ENCODE measurements at regions of chr5 and their contacts with region 1.

Region 1: DNA sequence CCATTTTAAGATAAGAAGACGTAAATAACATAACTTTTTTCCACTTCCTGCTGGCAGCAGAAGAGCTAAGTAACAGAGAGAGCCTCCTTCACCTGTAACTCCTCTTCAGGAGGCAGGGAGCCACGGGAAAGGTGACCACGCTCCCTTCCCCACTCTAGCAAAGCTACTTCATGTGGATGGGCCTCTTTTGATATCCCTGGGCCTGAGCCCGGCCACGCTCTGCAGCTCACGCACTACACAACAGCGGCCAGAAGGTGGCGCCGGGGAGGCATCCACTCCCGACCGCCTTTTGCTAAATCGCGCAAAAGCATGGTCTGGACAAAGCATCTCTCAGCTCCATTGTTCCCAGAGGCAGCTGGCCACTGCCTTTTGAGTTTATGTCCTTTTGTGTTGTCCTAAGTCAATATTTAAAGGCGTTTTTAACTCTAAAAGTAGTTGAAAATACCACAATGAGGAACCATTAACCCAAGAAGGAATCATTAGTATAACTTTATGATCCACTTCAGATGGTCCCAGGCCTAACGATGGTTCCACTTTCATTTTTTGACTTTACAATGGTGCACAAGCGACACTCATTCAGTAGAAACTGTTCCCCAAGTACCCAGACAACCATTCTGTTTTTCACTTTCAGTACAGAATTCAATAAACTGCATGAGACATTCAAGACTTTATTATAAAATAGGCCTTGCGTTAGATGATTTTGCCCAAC is 23.6 kb downstream of the CMBL start:
- DNase-seq: peak; percentile 44 to 83 (median 67)
- ATAC-seq: peak; percentile 86 to 94 (median 92)
- H3K4me3 ChIP-seq: no peak overlapping the region
- H3K4me3 Mint-ChIP-seq: no peak overlapping the region
- H3K27ac ChIP-seq: no peak overlapping the region
- H3K27ac Mint-ChIP-seq: no peak overlapping the region
- H3K4me1 ChIP-seq: peaks cover 0 to 13% of the 10 kb centered on the region in 2 experiments
- H3K4me1 Mint-ChIP-seq: peaks cover 7 to 12% (median 9%) of the 10 kb centered on the region in 3 donors
- H3K27me3 ChIP-seq: peaks cover 0 to 9% of the 10 kb centered on the region in 2 experiments
- H3K27me3 Mint-ChIP-seq: peaks cover 0 to 2% of the 10 kb centered on the region in 2 donors

Region 2: GRCh38 chr5:10353241-10354047 is 69.4 kb after region 1 on chr5 and contains the start of gene MARCHF6:
- CTCF ChIA-PET with region 1: interaction called, 8 to 17 read pairs
- POLR2A ChIA-PET with region 1: no interaction called
- DNase-seq: peak; percentile 88 to 97 (median 94)
- ATAC-seq: peak; percentile 88 to 95 (median 92)
- H3K4me3 ChIP-seq: peak within 1 kb of the TSS; percentile 71 to 87
- H3K4me3 Mint-ChIP-seq: peak within 1 kb of the TSS; percentile 98 to 100 (median 99)
- H3K27ac ChIP-seq: peak within 1 kb of the TSS; percentile 89
- H3K27ac Mint-ChIP-seq: peak within 1 kb of the TSS; percentile 97 to 98
- H3K4me1 ChIP-seq: peaks cover 14 to 25% of the 10 kb centered on the region in 2 experiments
- H3K4me1 Mint-ChIP-seq: peaks cover 44 to 47% (median 45%) of the 10 kb centered on the region in 3 donors
- H3K27me3 ChIP-seq: no peaks in the 10 kb centered on the region
- H3K27me3 Mint-ChIP-seq: no peaks in the 10 kb centered on the region
- total RNA-seq, gene MARCHF6: 146 to 185 (median 167) TPM

Region 3: GRCh38 chr5:10364186-10364683 is 80.2 kb after region 1 on chr5:
- CTCF ChIA-PET with region 1: interaction called, 10 to 20 read pairs
- POLR2A ChIA-PET with region 1: no interaction called
- DNase-seq: peak in 1 of 35 experiments; percentile 55
- ATAC-seq: peak in 2 of 4 experiments; percentile 23 to 52
- H3K4me3 ChIP-seq: no peak overlapping the region
- H3K4me3 Mint-ChIP-seq: no peak overlapping the region
- H3K27ac ChIP-seq: no peak overlapping the region
- H3K27ac Mint-ChIP-seq: no peak overlapping the region
- H3K4me1 ChIP-seq: peaks cover 5 to 25% of the 10 kb centered on the region in 2 experiments
- H3K4me1 Mint-ChIP-seq: peaks cover 84 to 89% (median 87%) of the 10 kb centered on the region in 3 donors
- H3K27me3 ChIP-seq: no peaks in the 10 kb centered on the region
- H3K27me3 Mint-ChIP-seq: no peaks in the 10 kb centered on the region

Region 4: GRCh38 chr5:10424124-10424731 is 140.1 kb after region 1 on chr5:
- CTCF ChIA-PET with region 1: interaction called, 10 to 12 read pairs
- POLR2A ChIA-PET with region 1: no interaction called
- DNase-seq: peak in 8 of 35 experiments; percentile 7 to 45 (median 17)
- ATAC-seq: peak in 1 of 4 experiments; percentile 54
- H3K4me3 ChIP-seq: no peak overlapping the region
- H3K4me3 Mint-ChIP-seq: no peak overlapping the region
- H3K27ac ChIP-seq: no peak overlapping the region
- H3K27ac Mint-ChIP-seq: peak overlapping the region; percentile 7 to 19
- H3K4me1 ChIP-seq: peaks cover 9 to 14% of the 10 kb centered on the region in 2 experiments
- H3K4me1 Mint-ChIP-seq: peaks cover 30 to 35% (median 32%) of the 10 kb centered on the region in 3 donors
- H3K27me3 ChIP-seq: no peaks in the 10 kb centered on the region
- H3K27me3 Mint-ChIP-seq: no peaks in the 10 kb centered on the region

Region 5: DNA sequence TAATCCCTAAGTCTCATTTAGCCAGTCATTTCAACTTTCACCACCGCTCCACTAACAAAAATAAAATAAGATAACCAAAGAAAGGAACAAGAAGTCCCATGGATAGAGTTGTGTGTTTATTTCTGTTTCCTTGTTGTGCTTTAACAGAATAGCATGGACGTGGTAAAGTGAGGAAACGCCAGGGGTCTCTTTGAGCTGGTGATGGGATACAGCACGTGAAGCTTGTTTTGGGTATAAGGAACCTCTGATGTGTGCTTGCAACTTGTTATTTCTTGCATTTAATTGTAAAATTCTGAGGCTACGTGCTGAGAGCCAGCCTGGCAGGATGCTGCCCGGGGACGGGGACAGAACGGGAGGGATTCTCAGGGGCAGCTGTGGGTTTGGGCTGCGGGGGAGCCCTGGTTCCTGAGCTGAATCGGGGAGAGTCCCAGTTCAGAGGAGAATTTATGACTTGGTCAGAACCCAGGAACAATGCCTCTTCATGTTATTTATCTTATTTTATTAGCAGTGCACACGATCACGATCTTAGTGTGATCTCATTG is 343.1 kb after region 1 on chr5:
- CTCF ChIA-PET with region 1: interaction called, 20 to 22 read pairs
- POLR2A ChIA-PET with region 1: no interaction called
- DNase-seq: no peak
- ATAC-seq: peak; percentile 16 to 32 (median 20)
- H3K4me3 ChIP-seq: peak overlapping the region; percentile 45 to 74
- H3K4me3 Mint-ChIP-seq: peak overlapping the region; percentile 66 to 89 (median 79)
- H3K27ac ChIP-seq: no peak overlapping the region
- H3K27ac Mint-ChIP-seq: peak overlapping the region; percentile 17 to 21
- H3K4me1 ChIP-seq: peaks cover 2 to 21% of the 10 kb centered on the region in 2 experiments
- H3K4me1 Mint-ChIP-seq: peaks cover 14 to 30% (median 14%) of the 10 kb centered on the region in 3 donors
- H3K27me3 ChIP-seq: peaks cover 0 to 14% of the 10 kb centered on the region in 2 experiments
- H3K27me3 Mint-ChIP-seq: peaks cover 0 to 5% of the 10 kb centered on the region in 2 donors